ENCODE measurements at regions of chr10 and their contacts with region 1.

Region 1: GRCh38 chr10:77846718-77847630 is 79.6 kb downstream of the DLG5 start:
- DNase-seq: peak; percentile 72 to 87
- H3K4me3 ChIP-seq: no peak overlapping the region
- H3K4me3 Mint-ChIP-seq: no peak overlapping the region
- H3K27ac Mint-ChIP-seq: peak overlapping the region; percentile 48
- H3K4me1 ChIP-seq: peaks cover 31% of the 10 kb centered on the region
- H3K4me1 Mint-ChIP-seq: peaks cover 48% of the 10 kb centered on the region
- H3K27me3 ChIP-seq: no peaks in the 10 kb centered on the region
- H3K27me3 Mint-ChIP-seq: no peaks in the 10 kb centered on the region
- CTCF ChIP-seq: peak; percentile 91 to 94

Region 2: DNA sequence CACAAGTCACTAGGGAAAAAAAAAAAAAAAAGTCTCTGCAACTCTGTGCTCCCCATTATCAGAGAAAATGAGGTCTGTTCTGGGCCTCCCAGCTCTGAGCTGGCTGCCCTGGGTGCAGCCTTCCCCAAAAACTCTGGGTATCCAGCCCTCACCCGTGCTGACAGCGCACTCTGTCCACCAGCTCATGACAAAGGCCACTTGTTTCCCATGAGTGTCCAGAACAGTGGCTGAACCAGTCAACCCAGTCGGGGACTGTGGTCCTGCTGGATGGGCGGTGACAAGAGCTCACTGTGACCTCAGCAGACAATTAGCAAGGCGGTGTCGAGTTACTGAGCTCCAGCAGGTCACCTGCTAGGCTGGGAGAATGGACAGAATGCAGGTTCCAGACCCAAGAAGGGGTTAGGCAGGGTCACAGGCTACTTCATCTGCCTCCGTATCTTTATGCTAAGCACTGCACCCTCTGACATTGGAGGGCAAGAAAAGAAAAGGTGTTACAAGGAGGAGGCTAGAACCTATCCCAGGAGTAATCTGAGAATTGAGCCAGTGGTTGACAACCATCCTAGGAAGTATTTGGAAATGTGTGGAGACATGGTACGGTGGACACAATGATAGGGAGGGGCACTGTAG is 42.4 kb after region 1 on chr10:
- CTCF ChIA-PET with region 1: interaction called, 19 read pairs
- POLR2A ChIA-PET with region 1: interaction called, 3 read pairs
- intact Hi-C with region 1: loop called (anchors 1 kb)
- DNase-seq: peak; percentile 95
- H3K4me3 ChIP-seq: no peak overlapping the region
- H3K4me3 Mint-ChIP-seq: peak overlapping the region; percentile 59
- H3K27ac Mint-ChIP-seq: peak overlapping the region; percentile 86
- H3K4me1 ChIP-seq: peaks cover 35% of the 10 kb centered on the region
- H3K4me1 Mint-ChIP-seq: peaks cover 72% of the 10 kb centered on the region
- H3K27me3 ChIP-seq: no peaks in the 10 kb centered on the region
- H3K27me3 Mint-ChIP-seq: no peaks in the 10 kb centered on the region
- CTCF ChIP-seq: no peak

Region 3: DNA sequence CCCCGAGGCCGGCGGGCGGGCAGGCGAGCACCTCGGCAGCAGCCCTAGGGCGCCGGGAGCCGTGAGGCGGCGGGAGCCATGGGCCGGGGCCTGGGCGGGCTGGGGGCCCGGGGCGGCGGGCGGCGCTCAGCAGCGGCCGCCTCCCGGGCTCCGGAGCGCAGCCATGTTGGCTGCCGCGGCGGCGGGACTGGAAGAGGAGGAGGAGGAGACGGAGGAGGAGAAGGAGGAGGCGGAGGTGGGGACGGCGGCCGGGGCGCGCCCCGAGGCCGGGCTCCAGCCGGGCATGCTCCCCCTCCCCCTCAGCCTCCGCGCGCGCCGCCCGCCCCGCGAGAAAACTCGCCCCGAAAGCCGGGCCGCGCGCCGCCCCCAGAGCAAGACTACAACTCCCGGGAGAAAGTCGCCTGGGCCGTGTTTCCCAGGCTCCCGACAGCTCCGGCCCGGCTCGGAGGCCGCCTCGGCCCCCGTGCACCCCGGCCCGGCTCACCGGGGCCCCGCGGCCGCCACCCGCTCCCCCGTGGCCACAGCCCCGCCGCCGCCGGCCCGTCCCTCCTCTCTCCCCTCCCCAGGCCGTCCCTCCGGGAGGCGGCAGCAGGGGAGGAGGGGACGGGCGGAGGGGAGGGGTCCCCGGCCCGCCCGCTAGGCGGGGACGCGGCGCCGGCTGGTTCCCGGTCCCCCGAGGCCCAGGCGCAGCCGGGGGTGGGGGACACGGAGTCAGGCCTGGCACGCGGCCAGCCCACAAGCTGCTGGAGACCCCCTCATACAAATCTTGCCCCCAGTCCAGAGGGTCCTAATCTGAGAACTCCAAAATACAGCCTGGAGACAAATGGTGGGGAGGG is 79.8 kb after region 1 on chr10 and contains the start of gene DLG5:
- CTCF ChIA-PET with region 1: interaction called, 3 read pairs
- POLR2A ChIA-PET with region 1: no interaction called
- intact Hi-C with region 1: loop called (anchors 2 kb)
- DNase-seq: peak; percentile 65 to 70
- H3K4me3 ChIP-seq: peak within 1 kb of the TSS; percentile 93
- H3K4me3 Mint-ChIP-seq: peak within 1 kb of the TSS; percentile 89
- H3K27ac Mint-ChIP-seq: peak within 1 kb of the TSS; percentile 74
- H3K4me1 ChIP-seq: peaks cover 26% of the 10 kb centered on the region
- H3K4me1 Mint-ChIP-seq: peaks cover 28% of the 10 kb centered on the region
- H3K27me3 ChIP-seq: no peaks in the 10 kb centered on the region
- H3K27me3 Mint-ChIP-seq: no peaks in the 10 kb centered on the region
- CTCF ChIP-seq: peak in 1 of 2 experiments; percentile 17
- total RNA-seq, gene DLG5: 65.9 and 69.7 TPM in 2 replicates

Region 4: GRCh38 chr10:77949167-77949566 is 102.2 kb after region 1 on chr10:
- CTCF ChIA-PET with region 1: no interaction called
- POLR2A ChIA-PET with region 1: no interaction called
- intact Hi-C with region 1: no loop called
- DNase-seq: no peak
- H3K4me3 ChIP-seq: no peak overlapping the region
- H3K4me3 Mint-ChIP-seq: no peak overlapping the region
- H3K27ac Mint-ChIP-seq: no peak overlapping the region
- H3K4me1 ChIP-seq: 0 out of 2 replicates have a peak, but pooled peaks cover 5% of the 10 kb centered on the region
- H3K4me1 Mint-ChIP-seq: no peaks in the 10 kb centered on the region
- H3K27me3 ChIP-seq: no peaks in the 10 kb centered on the region
- H3K27me3 Mint-ChIP-seq: no peaks in the 10 kb centered on the region
- CTCF ChIP-seq: no peak

Region 5: GRCh38 chr10:78004215-78005026 is 157.4 kb after region 1 on chr10:
- CTCF ChIA-PET with region 1: no interaction called
- POLR2A ChIA-PET with region 1: no interaction called
- intact Hi-C with region 1: loop called (anchors 5 kb)
- DNase-seq: peak in 1 of 2 experiments; percentile 7
- H3K4me3 ChIP-seq: no peak overlapping the region
- H3K4me3 Mint-ChIP-seq: no peak overlapping the region
- H3K27ac Mint-ChIP-seq: no peak overlapping the region
- H3K4me1 ChIP-seq: no peaks in the 10 kb centered on the region
- H3K4me1 Mint-ChIP-seq: no peaks in the 10 kb centered on the region
- H3K27me3 ChIP-seq: no peaks in the 10 kb centered on the region
- H3K27me3 Mint-ChIP-seq: no peaks in the 10 kb centered on the region
- CTCF ChIP-seq: peak in 1 of 2 experiments; percentile 19